GM18951 (cell line): ENCODE measurements at regions of chr2 and their contacts with region 1.

Region 1: DNA sequence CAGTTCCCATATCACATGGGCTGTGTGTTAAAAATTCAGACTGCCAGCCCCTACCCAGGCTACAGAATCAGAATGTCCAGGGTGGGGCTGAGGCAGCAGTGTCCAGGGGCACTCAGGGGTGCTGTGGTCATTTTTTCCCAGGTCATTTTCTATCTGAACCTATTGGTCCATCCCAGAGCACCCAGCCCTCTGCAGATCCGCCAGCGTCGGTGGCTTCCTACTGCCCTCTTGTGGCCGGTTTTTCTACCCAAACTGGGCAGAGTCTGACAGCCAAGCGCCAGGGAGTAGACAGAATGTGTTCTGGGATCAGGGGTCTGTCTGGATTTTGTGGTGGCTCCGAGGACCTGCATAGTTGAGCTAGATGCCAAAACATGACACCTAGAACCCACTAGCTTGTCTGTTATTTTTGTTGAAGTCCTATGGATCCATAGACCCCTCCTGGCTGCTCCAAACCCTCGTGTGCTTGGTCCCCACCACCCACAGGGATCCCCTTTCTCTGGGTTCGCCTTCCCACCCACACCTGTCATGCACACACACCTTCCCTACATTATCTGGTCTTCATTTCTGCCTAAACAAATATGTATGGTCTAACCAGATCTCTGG is 34.1 kb upstream of the RMDN2 start:
- POLR2A ChIP-seq: no peak

Region 2: GRCh38 chr2:37196320-37197195 is 694.4 kb before region 1 on chr2 and contains the start of gene CEBPZOS:
- in situ Hi-C with region 1: loop called (anchors 25 kb)
- POLR2A ChIP-seq: peak; percentile 89

Region 3: GRCh38 chr2:38128653-38129052 is 237.7 kb after region 1 on chr2:
- in situ Hi-C with region 1: loop called (anchors 10 kb)
- POLR2A ChIP-seq: no peak